GM12878 (cell line): ENCODE measurements at regions of chr6 and their contacts with region 1.

Region 1: GRCh38 chr6:137951064-137951597 is 84.1 kb downstream of the TNFAIP3 start:
- DNase-seq: no peak
- ATAC-seq: peak; percentile 82
- H3K4me3 ChIP-seq: no peak overlapping the region
- H3K27ac ChIP-seq: no peak overlapping the region
- H3K4me1 ChIP-seq: peaks cover 27% of the 10 kb centered on the region
- H3K27me3 ChIP-seq: no peaks in the 10 kb centered on the region
- CTCF ChIP-seq: peak in 2 of 3 experiments; percentile 59 to 62; a peak in 4 of 6 replicates
- EP300 ChIP-seq: peak in 1 of 2 experiments; percentile 19; a peak in 1 of 4 replicates
- POLR2A ChIP-seq: no peak
- RAD21 ChIP-seq: peak; percentile 89

Region 2: DNA sequence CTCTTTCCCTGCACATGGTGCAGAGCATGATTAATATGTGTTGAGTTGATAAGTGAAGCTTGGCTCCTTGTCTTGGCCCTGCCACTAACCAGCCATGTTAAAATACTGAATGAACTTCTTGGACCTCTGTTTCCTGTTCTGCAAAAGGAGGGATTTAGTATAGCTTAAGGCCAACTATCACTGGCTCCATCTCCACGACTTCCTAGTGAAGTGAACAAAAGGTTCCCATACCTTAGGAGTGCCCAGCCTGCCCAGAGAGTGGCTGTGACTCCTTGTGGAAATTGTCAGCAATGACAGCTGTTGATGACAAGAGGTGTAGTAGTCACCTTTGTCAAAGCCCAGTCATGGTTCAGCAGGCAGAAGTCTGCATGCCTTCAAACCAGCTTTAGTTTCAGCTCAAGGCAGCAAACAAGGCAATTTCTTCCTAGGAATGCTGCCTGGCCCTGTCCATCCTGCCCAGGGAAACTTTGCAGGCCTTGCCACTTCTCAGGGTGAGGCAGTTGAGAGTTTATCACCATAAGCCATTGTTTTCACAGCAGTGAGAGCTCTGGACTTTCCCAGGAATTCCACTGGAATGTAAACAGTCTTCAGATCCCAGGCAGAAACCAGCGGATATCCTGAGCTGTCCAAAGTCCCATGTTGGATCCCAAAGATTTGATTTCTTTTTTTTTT is 253.7 kb before region 1 on chr6:
- CTCF ChIA-PET with region 1: interaction called, 6 read pairs
- POLR2A ChIA-PET with region 1: no interaction called
- RAD21 ChIA-PET with region 1: interaction called, 3 read pairs
- SMC1A ChIA-PET with region 1: interaction called, 18 read pairs
- in situ Hi-C with region 1: no loop called
- intact Hi-C with region 1: no loop called
- DNase-seq: no peak
- ATAC-seq: peak; percentile 80
- H3K4me3 ChIP-seq: no peak overlapping the region
- H3K27ac ChIP-seq: no peak overlapping the region
- H3K4me1 ChIP-seq: peaks cover 13% of the 10 kb centered on the region
- H3K27me3 ChIP-seq: no peaks in the 10 kb centered on the region
- CTCF ChIP-seq: peak; percentile 14 to 35 (median 27); a peak in 5 of 6 replicates
- EP300 ChIP-seq: no peak
- POLR2A ChIP-seq: no peak
- RAD21 ChIP-seq: peak; percentile 58

Region 3: DNA sequence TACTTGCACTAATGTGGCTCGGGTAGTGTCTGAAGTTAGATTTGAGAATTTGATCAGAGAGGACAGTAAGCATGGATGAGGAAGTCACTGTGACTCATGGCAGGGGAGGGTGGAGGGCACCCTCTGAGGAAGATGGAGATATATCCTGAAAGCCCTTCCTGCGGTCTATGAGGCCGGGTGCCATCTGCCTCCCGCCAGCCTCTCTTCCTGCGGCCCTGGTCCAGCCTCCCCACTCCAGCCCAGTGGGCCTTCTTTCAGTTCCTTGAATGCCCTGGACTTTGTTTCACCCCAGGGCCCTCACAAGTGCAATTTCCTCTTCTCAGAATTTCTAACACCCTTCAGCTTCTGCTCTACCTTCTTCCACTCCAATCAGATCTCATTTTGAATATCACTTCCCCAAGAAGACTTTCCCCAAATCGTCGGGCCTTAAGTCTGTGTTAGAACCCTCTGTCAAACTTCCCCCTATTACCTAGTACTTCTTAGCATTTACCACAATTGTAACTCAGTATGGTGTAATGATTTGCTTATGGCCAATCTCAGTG is 104.3 kb before region 1 on chr6:
- CTCF ChIA-PET with region 1: no interaction called
- POLR2A ChIA-PET with region 1: no interaction called
- RAD21 ChIA-PET with region 1: no interaction called
- SMC1A ChIA-PET with region 1: no interaction called
- in situ Hi-C with region 1: no loop called
- intact Hi-C with region 1: no loop called
- DNase-seq: no peak
- ATAC-seq: peak; percentile 79
- H3K4me3 ChIP-seq: no peak overlapping the region
- H3K27ac ChIP-seq: no peak overlapping the region
- H3K4me1 ChIP-seq: peaks cover 20% of the 10 kb centered on the region
- H3K27me3 ChIP-seq: no peaks in the 10 kb centered on the region
- CTCF ChIP-seq: no peak
- EP300 ChIP-seq: no peak
- POLR2A ChIP-seq: no peak
- RAD21 ChIP-seq: no peak

Region 4: DNA sequence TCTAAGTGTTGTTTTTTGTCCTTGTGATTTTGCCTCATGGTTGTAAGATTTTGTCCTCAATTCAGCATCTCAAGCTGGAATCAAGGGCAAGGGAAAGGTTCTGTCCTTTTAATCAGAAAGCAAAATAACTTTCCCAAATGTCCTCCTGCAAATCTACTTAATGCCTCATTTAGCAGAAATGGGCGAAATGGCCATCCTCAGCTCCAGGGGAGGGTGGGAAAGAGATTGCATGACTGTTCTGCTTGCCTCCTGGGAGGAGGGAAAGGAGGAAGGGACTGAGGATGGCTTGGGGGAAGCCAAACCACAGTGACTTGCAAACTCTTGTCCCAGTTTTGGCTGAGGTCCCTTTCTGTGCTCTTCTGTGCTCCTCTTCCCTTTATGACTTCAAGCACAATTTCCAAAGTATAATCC is 40.7 kb before region 1 on chr6:
- CTCF ChIA-PET with region 1: interaction called, 20 read pairs
- POLR2A ChIA-PET with region 1: no interaction called
- RAD21 ChIA-PET with region 1: interaction called, 13 read pairs
- SMC1A ChIA-PET with region 1: interaction called, 10 read pairs
- in situ Hi-C with region 1: no loop called
- intact Hi-C with region 1: no loop called
- DNase-seq: no peak
- ATAC-seq: no peak
- H3K4me3 ChIP-seq: no peak overlapping the region
- H3K27ac ChIP-seq: peak overlapping the region; percentile 95
- H3K4me1 ChIP-seq: peaks cover 48% of the 10 kb centered on the region
- H3K27me3 ChIP-seq: no peaks in the 10 kb centered on the region
- CTCF ChIP-seq: no peak
- EP300 ChIP-seq: no peak
- POLR2A ChIP-seq: no peak
- RAD21 ChIP-seq: no peak

Region 5: DNA sequence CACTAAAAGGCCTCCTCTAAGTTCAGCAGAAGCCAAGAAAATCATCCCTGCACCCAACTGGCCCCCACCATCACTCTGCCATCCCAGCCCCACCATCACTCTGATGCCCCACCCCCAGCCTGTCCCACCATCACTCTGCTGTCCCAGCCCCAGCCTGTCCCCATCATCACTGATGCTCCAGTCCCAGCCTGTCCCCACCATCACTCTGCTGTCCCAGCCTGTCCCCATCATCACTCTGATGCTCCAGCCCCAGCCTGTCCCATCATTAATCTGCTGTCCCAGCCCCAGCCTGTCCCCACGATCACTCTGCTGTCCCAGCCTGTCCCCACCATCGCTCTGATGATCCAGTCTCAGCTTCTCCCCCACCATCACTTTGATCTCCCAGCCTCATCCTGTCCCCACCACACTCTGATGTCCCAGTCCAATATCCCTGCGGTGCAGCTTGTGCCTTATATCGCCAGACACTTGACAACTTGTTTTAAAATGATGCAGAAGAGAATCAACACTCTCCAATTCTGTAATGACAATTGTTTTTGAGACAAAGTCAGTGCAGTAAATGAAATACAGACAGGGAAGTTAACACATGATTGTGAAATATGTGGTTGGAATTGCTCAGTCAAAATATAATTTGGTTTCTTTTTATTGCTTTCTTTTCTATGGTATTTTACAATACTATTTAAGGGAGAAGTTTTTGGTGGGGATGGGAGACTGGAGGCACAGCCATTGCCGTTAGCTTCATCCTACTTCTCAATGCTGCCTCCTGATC is 16.7 kb after region 1 on chr6:
- CTCF ChIA-PET with region 1: interaction called, 83 read pairs
- POLR2A ChIA-PET with region 1: interaction called, 5 read pairs
- RAD21 ChIA-PET with region 1: interaction called, 13 read pairs
- SMC1A ChIA-PET with region 1: interaction called, 112 read pairs
- in situ Hi-C with region 1: no loop called
- intact Hi-C with region 1: no loop called
- DNase-seq: no peak
- ATAC-seq: no peak
- H3K4me3 ChIP-seq: no peak overlapping the region
- H3K27ac ChIP-seq: no peak overlapping the region
- H3K4me1 ChIP-seq: peaks cover 32% of the 10 kb centered on the region
- H3K27me3 ChIP-seq: no peaks in the 10 kb centered on the region
- CTCF ChIP-seq: no peak
- EP300 ChIP-seq: no peak
- POLR2A ChIP-seq: no peak
- RAD21 ChIP-seq: no peak

Region 6: GRCh38 chr6:137975188-137975940 is 24.2 kb after region 1 on chr6:
- CTCF ChIA-PET with region 1: interaction called, 161 read pairs
- POLR2A ChIA-PET with region 1: interaction called, 4 read pairs
- RAD21 ChIA-PET with region 1: interaction called, 69 read pairs
- SMC1A ChIA-PET with region 1: interaction called, 57 read pairs
- in situ Hi-C with region 1: no loop called
- intact Hi-C with region 1: loop called (anchors 2 kb)
- DNase-seq: peak; percentile 53
- ATAC-seq: peak; percentile 67
- H3K4me3 ChIP-seq: peak overlapping the region; percentile 1; the same call in 1 of the 2 replicates
- H3K27ac ChIP-seq: peak overlapping the region; percentile 34
- H3K4me1 ChIP-seq: peaks cover 36% of the 10 kb centered on the region
- H3K27me3 ChIP-seq: no peaks in the 10 kb centered on the region
- CTCF ChIP-seq: peak; percentile 23 to 62 (median 44); a peak in 5 of 6 replicates
- EP300 ChIP-seq: no peak
- POLR2A ChIP-seq: no peak
- RAD21 ChIP-seq: peak; percentile 81

Region 7: GRCh38 chr6:138109042-138109997 is 158.2 kb after region 1 on chr6:
- CTCF ChIA-PET with region 1: interaction called, 17 read pairs
- POLR2A ChIA-PET with region 1: no interaction called
- RAD21 ChIA-PET with region 1: interaction called, 11 read pairs
- SMC1A ChIA-PET with region 1: interaction called, 3 read pairs
- in situ Hi-C with region 1: no loop called
- intact Hi-C with region 1: no loop called
- DNase-seq: peak; percentile 21
- ATAC-seq: peak; percentile 52
- H3K4me3 ChIP-seq: no peak overlapping the region
- H3K27ac ChIP-seq: no peak overlapping the region
- H3K4me1 ChIP-seq: 0 out of 2 replicates have a peak, but pooled peaks cover 5% of the 10 kb centered on the region
- H3K27me3 ChIP-seq: peaks cover 2 to 31% of the 10 kb centered on the region in 2 experiments
- CTCF ChIP-seq: peak; percentile 84 to 94 (median 91)
- EP300 ChIP-seq: no peak
- POLR2A ChIP-seq: no peak
- RAD21 ChIP-seq: peak; percentile 88